Cardiac septum (tissue), 1 donor: ENCODE measurements at regions of chr1 and their contacts with region 1.

Region 1: GRCh38 chr1:26066857-26067256 is 573 bp downstream of the TRIM63 start:
- DNase-seq: peak; percentile 90

Region 2: GRCh38 chr1:26021647-26022403 is 45.0 kb before region 1 on chr1 and contains the start of gene EXTL1:
- intact Hi-C with region 1: loop called (anchors 2 kb)
- DNase-seq: peak; percentile 89
- total RNA-seq, gene EXTL1: 9.2 TPM

Region 3: DNA sequence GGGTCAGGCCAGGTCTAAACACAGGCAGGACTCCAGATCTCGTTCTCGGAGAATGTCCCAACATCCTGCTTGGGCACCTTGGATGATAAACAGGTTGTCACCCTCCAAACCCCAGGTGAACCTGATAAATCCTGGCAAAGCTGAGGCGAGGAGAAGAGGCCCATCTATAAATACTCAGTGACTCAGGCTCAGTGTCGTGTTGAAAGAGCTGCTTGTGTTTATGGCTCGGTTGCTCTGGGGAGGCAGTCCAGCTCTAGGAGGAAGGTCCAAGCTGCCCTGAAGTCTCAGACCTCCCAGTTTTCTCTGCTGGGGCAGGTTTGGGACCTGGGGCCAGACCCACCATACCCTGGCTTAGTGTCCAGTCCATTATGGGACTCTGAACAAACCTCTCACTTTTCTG is 16.4 kb after region 1 on chr1:
- intact Hi-C with region 1: loop called (anchors 2 kb)
- DNase-seq: no peak

Region 4: GRCh38 chr1:26094677-26095383 is 28.0 kb after region 1 on chr1:
- intact Hi-C with region 1: loop called (anchors 1 kb)
- DNase-seq: no peak

Region 5: DNA sequence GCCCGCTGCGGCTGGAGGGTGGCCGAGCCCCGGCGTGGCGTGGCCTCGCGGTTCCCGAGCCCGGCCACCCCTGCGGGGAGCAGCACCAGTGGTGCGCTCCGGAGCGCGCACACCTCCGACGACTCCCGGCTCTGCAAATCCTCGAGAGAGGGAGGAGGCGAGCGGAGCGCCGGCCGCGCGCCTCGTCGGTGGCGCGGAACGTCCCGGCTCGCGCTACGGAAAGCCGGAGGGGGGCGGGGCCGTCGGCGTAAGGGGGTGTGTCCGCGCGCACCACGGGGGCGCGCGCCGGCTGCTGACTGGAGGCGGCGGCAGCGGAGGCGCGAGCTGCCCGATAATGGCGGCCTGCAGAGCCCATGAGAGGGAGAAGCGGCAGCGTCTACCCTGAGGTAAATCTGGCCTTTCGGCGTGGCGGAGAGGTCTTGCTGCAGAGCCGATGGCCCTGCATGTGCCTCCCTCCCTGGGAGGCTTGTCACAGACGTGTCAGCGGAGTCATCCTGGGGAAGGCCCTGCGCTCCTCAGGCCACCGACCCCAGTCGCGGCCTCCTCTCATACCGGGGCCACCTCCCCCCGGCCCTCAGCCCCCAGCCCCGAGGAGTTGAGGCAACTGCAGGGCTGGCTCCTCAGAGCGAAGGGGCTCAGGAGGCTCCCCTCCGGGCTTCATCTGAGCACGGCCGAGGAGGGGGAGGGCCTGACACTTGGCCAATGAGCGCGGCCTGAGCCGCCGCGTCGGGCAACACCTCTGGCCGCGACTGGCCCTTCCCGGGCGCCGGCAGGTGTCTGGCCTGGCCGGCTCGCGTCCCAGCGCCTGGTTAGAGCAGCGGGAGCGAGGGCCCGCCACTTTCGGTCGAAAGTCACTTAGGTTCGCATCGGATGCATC is 44.9 kb after region 1 on chr1 and contains the start of gene PDIK1L:
- intact Hi-C with region 1: no loop called
- DNase-seq: peak; percentile 97
- total RNA-seq, gene PDIK1L: 3.5 TPM